ENCODE measurements at regions of chr11 and their contacts with region 1.

Region 1: GRCh38 chr11:575996-576768 is at the start of gene PHRF1:
- DNase-seq: peak; percentile 95
- H3K4me3 ChIP-seq: peak within 1 kb of the TSS; percentile 100
- H3K27ac ChIP-seq: peak within 1 kb of the TSS; percentile 70
- H3K4me1 ChIP-seq: peaks cover 38% of the 10 kb centered on the region
- CTCF ChIP-seq: no peak
- total RNA-seq, gene PHRF1: 23.3 and 25.6 TPM in 2 replicates

Region 2: GRCh38 chr11:326842-327580 is 249.2 kb before region 1 on chr11:
- CTCF ChIA-PET with region 1: no interaction called
- POLR2A ChIA-PET with region 1: no interaction called
- intact Hi-C with region 1: no loop called
- DNase-seq: peak; percentile 81
- H3K4me3 ChIP-seq: peak overlapping the region; percentile 44
- H3K27ac ChIP-seq: peak overlapping the region; percentile 75
- H3K4me1 ChIP-seq: peaks cover 61% of the 10 kb centered on the region
- CTCF ChIP-seq: no peak; the same call in 1 of the 2 replicates

Region 3: GRCh38 chr11:560305-561147 is 15.7 kb before region 1 on chr11 and contains the starts of genes LMNTD2 and RASSF7:
- CTCF ChIA-PET with region 1: no interaction called
- POLR2A ChIA-PET with region 1: interaction called, 5 read pairs
- intact Hi-C with region 1: loop called (anchors 1 kb)
- DNase-seq: peak; percentile 97
- H3K4me3 ChIP-seq: peak within 1 kb of the TSS; percentile 86
- H3K27ac ChIP-seq: no peak within 1 kb of the TSS
- H3K4me1 ChIP-seq: peaks cover 28% of the 10 kb centered on the region
- CTCF ChIP-seq: no peak
- total RNA-seq, gene LMNTD2: 4.7 and 7.5 TPM in 2 replicates
- total RNA-seq, gene RASSF7: 18.0 and 22.1 TPM in 2 replicates

Region 4: GRCh38 chr11:615504-616319 is 39.5 kb after region 1 on chr11 and contains the start of gene IRF7:
- CTCF ChIA-PET with region 1: no interaction called
- POLR2A ChIA-PET with region 1: no interaction called
- intact Hi-C with region 1: loop called (anchors 5 kb)
- DNase-seq: peak; percentile 91
- H3K4me3 ChIP-seq: peak within 1 kb of the TSS; percentile 65
- H3K27ac ChIP-seq: peak within 1 kb of the TSS; percentile 59
- H3K4me1 ChIP-seq: peaks cover 19% of the 10 kb centered on the region
- CTCF ChIP-seq: no peak
- total RNA-seq, gene IRF7: 18.7 and 20.9 TPM in 2 replicates

Region 5: GRCh38 chr11:765025-765801 is 189.0 kb after region 1 on chr11:
- CTCF ChIA-PET with region 1: no interaction called
- POLR2A ChIA-PET with region 1: no interaction called
- intact Hi-C with region 1: no loop called
- DNase-seq: peak; percentile 65
- H3K4me3 ChIP-seq: no peak overlapping the region
- H3K27ac ChIP-seq: no peak overlapping the region
- H3K4me1 ChIP-seq: no peaks in the 10 kb centered on the region
- CTCF ChIP-seq: peak; percentile 75

Region 6: GRCh38 chr11:809287-810039 is 233.3 kb after region 1 on chr11 and contains the start of gene RPLP2:
- CTCF ChIA-PET with region 1: no interaction called
- POLR2A ChIA-PET with region 1: no interaction called
- intact Hi-C with region 1: loop called (anchors 5 kb)
- DNase-seq: peak; percentile 99
- H3K4me3 ChIP-seq: peak within 1 kb of the TSS; percentile 100
- H3K27ac ChIP-seq: peak within 1 kb of the TSS; percentile 84
- H3K4me1 ChIP-seq: peaks cover 56% of the 10 kb centered on the region
- CTCF ChIP-seq: no peak
- total RNA-seq, gene RPLP2: 1,564 and 1,687 TPM in 2 replicates

Measured in OCI-LY7 (cell line).